HepG2 (cell line): ENCODE measurements at regions of chr13 and their contacts with region 1.

Region 1: DNA sequence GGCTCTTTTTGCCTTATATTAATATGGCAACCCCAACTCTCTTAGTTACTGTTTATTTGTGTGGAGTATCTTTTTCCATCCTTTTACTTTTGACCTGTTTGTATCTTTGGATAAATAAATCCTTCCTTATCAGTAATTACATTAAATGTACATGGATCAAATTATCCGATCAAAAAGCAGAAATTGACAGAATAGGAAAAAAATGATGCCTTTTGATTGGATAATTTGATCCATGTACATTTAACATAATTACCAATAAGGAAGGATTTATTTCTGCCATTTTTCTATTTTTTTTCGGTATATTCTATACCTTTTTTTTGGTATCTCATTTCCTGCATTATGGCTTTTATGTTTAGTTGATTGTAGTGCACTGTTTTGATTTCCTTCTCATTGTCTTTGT is 57.2 kb downstream of the ZMYM2 start:
- DNase-seq: no peak
- ATAC-seq: no peak
- H3K4me3 ChIP-seq: no peak overlapping the region
- H3K27ac ChIP-seq: no peak overlapping the region
- H3K4me1 ChIP-seq: no peaks in the 10 kb centered on the region
- H3K27me3 ChIP-seq: no peaks in the 10 kb centered on the region
- CTCF ChIP-seq: no peak
- EP300 ChIP-seq: no peak
- POLR2A ChIP-seq: no peak
- RAD21 ChIP-seq: no peak

Region 2: GRCh38 chr13:19978831-19979437 is 36.8 kb before region 1 on chr13:
- CTCF ChIA-PET with region 1: no interaction called
- POLR2A ChIA-PET with region 1: no interaction called
- in situ Hi-C with region 1: no loop called
- intact Hi-C with region 1: no loop called
- DNase-seq: no peak
- ATAC-seq: no peak
- H3K4me3 ChIP-seq: no peak overlapping the region
- H3K27ac ChIP-seq: no peak overlapping the region
- H3K4me1 ChIP-seq: peaks cover 7% of the 10 kb centered on the region; the same call in 1 of the 2 replicates
- H3K27me3 ChIP-seq: no peaks in the 10 kb centered on the region
- CTCF ChIP-seq: no peak
- EP300 ChIP-seq: no peak
- POLR2A ChIP-seq: no peak
- RAD21 ChIP-seq: no peak

Region 3: GRCh38 chr13:20051366-20051765 is 35.6 kb after region 1 on chr13:
- CTCF ChIA-PET with region 1: no interaction called
- POLR2A ChIA-PET with region 1: no interaction called
- in situ Hi-C with region 1: no loop called
- intact Hi-C with region 1: loop called (anchors 1 kb)
- DNase-seq: no peak
- ATAC-seq: no peak
- H3K4me3 ChIP-seq: no peak overlapping the region
- H3K27ac ChIP-seq: no peak overlapping the region
- H3K4me1 ChIP-seq: no peaks in the 10 kb centered on the region
- H3K27me3 ChIP-seq: no peaks in the 10 kb centered on the region
- CTCF ChIP-seq: no peak
- EP300 ChIP-seq: no peak
- POLR2A ChIP-seq: no peak
- RAD21 ChIP-seq: no peak

Region 4: GRCh38 chr13:20064128-20064527 is 48.4 kb after region 1 on chr13:
- CTCF ChIA-PET with region 1: no interaction called
- POLR2A ChIA-PET with region 1: no interaction called
- in situ Hi-C with region 1: no loop called
- intact Hi-C with region 1: no loop called
- DNase-seq: no peak
- ATAC-seq: no peak
- H3K4me3 ChIP-seq: no peak overlapping the region
- H3K27ac ChIP-seq: no peak overlapping the region
- H3K4me1 ChIP-seq: no peaks in the 10 kb centered on the region
- H3K27me3 ChIP-seq: no peaks in the 10 kb centered on the region
- CTCF ChIP-seq: no peak
- EP300 ChIP-seq: no peak
- POLR2A ChIP-seq: no peak
- RAD21 ChIP-seq: no peak